ENCODE measurements at regions of chr2 and their contacts with region 1.

Region 1: GRCh38 chr2:217510771-217511291 is 492.0 kb downstream of the TNS1 start:
- DNase-seq: peak; percentile 68
- H3K4me3 ChIP-seq: no peak overlapping the region
- H3K27ac ChIP-seq: no peak overlapping the region
- H3K4me1 ChIP-seq: peaks cover 5% of the 10 kb centered on the region
- H3K27me3 ChIP-seq: no peaks in the 10 kb centered on the region
- CTCF ChIP-seq: peak; percentile 64 to 79

Region 2: DNA sequence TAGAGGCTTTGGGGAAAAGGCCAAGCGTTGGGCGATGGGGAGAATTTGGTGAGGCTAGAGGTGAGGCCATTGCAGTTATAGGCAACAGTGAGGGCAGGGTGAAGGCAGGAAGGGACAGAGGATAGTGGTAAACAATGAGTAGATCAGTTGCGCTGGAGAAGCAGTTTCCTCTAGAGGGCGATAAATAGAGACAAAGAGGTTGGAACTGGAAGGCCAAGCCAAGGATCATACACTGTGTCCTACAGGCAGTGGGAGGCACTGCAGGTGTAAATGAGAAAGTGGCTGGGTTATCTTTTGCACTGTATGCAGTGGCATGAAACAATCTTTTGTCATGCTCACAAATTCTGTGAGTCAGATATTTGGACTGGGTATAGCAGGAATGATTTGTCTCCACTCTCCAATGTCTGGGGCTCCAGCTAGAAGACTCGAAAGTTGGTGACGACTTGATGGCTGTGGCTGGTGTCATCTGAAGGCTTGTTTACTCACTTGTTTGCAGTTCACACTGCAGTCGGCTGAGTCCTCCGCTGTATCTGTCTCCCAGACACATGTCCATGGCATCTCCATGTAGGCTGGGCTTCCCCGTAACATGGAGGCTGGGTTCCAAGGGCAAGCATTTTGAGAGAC is 733.1 kb before region 1 on chr2:
- CTCF ChIA-PET with region 1: no interaction called
- dilution Hi-C with region 1: no loop called
- in situ Hi-C with region 1: no loop called
- intact Hi-C with region 1: loop called (anchors 1 kb)
- DNase-seq: peak; percentile 76
- H3K4me3 ChIP-seq: no peak overlapping the region
- H3K27ac ChIP-seq: no peak overlapping the region
- H3K4me1 ChIP-seq: peaks cover 13% of the 10 kb centered on the region
- H3K27me3 ChIP-seq: no peaks in the 10 kb centered on the region
- CTCF ChIP-seq: peak; percentile 96 to 97

Region 3: DNA sequence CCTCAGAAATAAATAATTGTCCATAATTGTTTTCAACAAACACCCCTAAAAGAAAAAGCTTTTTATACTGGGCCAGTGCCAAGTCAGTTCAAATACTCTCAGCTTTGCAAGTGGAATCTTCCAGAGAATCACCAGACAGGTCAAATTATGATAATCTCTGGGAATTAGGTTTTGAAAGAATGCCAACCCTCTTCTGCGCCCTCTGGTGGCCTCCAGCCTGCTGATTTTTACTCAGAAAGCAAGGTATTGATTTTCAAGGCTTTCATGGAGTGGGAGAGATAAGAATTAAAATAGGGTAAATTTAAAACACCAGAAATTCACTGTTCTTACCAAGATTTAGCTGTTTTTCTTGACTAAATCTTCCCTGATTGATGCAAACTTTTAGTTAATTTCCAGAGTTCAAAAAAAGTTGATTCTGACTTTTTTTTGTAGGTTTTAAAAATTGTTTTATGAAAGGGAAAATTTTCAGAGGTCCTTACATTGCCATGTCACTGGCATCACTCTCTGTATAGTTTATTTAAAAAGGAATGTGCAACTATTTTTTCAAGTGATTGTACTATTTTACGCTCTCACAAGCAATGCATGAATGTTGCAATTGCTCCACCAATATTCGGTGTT is 368.1 kb before region 1 on chr2:
- CTCF ChIA-PET with region 1: interaction called, 3 read pairs
- dilution Hi-C with region 1: no loop called
- in situ Hi-C with region 1: no loop called
- intact Hi-C with region 1: loop called (anchors 2 kb)
- DNase-seq: peak; percentile 17
- H3K4me3 ChIP-seq: no peak overlapping the region
- H3K27ac ChIP-seq: no peak overlapping the region
- H3K4me1 ChIP-seq: no peaks in the 10 kb centered on the region
- H3K27me3 ChIP-seq: no peaks in the 10 kb centered on the region
- CTCF ChIP-seq: peak; percentile 78 to 81

Region 4: DNA sequence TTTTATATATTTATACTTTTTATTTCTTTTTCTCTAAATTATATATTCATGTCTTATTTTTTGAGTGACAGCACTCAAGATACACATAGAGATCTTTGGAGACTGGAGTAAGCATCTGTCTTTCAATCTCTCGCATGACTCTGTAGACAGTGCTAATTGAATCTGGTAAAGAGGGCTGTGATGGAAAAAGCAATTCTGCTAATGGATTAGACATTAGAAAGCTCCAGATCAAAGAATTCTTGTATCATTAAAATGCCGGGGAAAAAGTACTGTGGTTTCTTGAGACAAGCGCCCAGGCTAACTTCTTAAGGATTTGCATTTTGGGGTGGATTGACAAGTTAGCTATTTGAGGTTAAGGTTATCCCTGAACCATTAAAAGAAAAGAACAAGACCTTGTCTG is 267.9 kb before region 1 on chr2:
- CTCF ChIA-PET with region 1: interaction called, 11 read pairs
- dilution Hi-C with region 1: no loop called
- in situ Hi-C with region 1: no loop called
- intact Hi-C with region 1: no loop called
- DNase-seq: no peak
- H3K4me3 ChIP-seq: no peak overlapping the region
- H3K27ac ChIP-seq: no peak overlapping the region
- H3K4me1 ChIP-seq: no peaks in the 10 kb centered on the region
- H3K27me3 ChIP-seq: no peaks in the 10 kb centered on the region
- CTCF ChIP-seq: no peak

Region 5: DNA sequence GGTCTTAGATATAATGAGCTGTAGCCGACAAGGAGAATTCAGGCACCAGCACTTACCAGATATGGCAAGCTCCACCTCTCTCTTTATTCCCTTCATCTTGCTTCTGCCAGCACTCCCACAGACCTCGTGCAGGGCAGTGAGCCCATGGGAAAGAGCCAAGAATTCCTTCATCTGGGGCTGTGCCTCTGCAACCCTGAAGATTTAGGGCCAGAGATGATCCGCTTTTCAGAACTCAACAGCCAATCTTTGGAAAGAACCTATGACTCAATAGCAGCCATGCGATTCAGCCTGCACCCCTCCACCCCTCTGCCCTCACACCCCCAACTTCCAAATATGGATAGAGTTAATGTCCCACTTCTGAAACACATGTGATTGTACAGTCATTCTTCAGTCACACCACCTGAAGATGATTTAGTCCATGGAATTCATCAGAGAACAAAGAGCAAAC is 117.2 kb before region 1 on chr2:
- CTCF ChIA-PET with region 1: no interaction called
- dilution Hi-C with region 1: no loop called
- in situ Hi-C with region 1: no loop called
- intact Hi-C with region 1: loop called (anchors 1 kb)
- DNase-seq: peak; percentile 91
- H3K4me3 ChIP-seq: peak overlapping the region; percentile 27 to 42 (median 36)
- H3K27ac ChIP-seq: peak overlapping the region; percentile 73
- H3K4me1 ChIP-seq: peaks cover 21% of the 10 kb centered on the region
- H3K27me3 ChIP-seq: no peaks in the 10 kb centered on the region
- CTCF ChIP-seq: no peak

Region 6: DNA sequence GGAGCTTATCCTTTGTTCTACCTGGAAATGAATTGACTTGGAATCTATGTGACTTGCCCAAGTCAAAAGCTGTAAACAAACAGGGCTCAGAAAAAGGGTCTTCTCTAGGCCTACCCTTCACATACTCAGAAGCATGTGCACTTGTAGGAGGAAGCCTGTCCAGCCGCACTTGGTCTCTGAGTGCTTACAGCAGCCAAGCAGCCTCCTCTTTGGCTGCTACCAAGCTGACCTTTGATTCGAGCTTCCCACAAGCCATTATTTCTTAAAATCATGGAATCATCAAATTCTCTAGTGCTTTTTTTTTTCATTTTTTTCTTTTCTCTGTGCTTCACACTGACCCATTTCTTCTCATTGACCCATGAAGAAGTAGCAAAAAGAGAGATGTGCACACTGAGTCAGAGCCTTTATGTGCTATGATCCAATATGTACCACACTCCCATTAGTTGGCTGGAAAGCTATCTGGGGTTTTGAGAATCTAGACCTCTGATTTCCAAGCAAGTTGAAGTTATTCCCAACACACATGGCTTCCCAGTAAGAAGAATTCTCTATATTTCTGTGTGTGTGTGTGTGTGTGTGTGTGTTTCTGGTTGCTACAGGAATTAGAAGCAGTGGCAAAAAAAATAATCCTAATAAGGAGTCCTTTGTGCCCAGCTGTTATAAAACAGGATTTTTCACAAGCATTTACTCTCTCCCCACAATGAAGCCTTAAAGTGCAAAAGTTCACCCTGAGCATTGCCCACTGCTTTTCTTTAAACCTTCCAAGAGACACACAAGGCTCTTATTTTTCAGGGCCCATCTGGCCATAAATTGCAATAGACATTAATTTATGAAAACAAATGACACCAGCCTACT is 100.7 kb before region 1 on chr2:
- CTCF ChIA-PET with region 1: no interaction called
- dilution Hi-C with region 1: no loop called
- in situ Hi-C with region 1: no loop called
- intact Hi-C with region 1: no loop called
- DNase-seq: no peak
- H3K4me3 ChIP-seq: no peak overlapping the region
- H3K27ac ChIP-seq: no peak overlapping the region
- H3K4me1 ChIP-seq: peaks cover 8% of the 10 kb centered on the region
- H3K27me3 ChIP-seq: no peaks in the 10 kb centered on the region
- CTCF ChIP-seq: no peak

Region 7: GRCh38 chr2:217756375-217757107 is 245.7 kb after region 1 on chr2:
- CTCF ChIA-PET with region 1: no interaction called
- dilution Hi-C with region 1: no loop called
- in situ Hi-C with region 1: no loop called
- intact Hi-C with region 1: loop called (anchors 5 kb)
- DNase-seq: no peak
- H3K4me3 ChIP-seq: no peak overlapping the region
- H3K27ac ChIP-seq: no peak overlapping the region
- H3K4me1 ChIP-seq: no peaks in the 10 kb centered on the region
- H3K27me3 ChIP-seq: peaks cover 3% of the 10 kb centered on the region
- CTCF ChIP-seq: peak; percentile 58 to 91

Measured in mammary epithelial cell (primary cell).